Adrenal gland (tissue), 19 donors: ENCODE measurements at regions of chr17 and their contacts with region 1.

Region 1: DNA sequence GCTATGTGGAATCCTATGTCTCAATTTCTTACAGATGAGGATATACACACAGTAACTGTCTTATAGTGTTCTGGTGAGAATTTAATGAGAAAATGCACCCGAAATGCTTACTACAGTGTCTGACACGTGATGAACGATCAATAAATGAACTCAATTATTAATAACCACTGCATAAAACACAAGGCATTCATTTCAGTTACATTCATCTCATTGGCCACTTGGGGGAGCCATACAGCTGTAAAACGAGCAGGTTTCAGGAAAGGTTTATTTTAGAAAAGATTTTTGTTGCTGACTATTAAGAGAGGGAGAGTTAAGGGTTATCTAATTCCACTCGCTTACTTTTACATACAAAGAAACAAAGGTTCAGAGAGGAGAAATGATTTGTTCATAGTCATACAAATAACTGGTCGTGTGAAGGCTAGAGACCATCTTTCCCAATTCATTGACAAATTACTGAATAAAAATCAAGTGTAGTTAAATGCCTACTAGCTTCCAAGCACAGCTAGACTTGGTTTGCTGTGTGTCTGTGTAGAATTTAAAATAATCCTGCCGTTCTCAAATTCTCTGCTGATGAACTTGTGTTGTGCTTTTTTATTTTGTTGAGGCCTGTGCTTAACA is 160.1 kb downstream of the MAP2K4 start:
- DNase-seq: peak in 5 of 7 donors; percentile 24 to 60 (median 42)
- H3K4me3 ChIP-seq: no peak overlapping the region
- H3K27ac ChIP-seq: no peak overlapping the region
- H3K4me1 ChIP-seq: no peaks in the 10 kb centered on the region
- H3K27me3 ChIP-seq: no peaks in the 10 kb centered on the region
- CTCF ChIP-seq: peak; percentile 63 to 77 (median 68)
- POLR2A ChIP-seq: no peak

Region 2: DNA sequence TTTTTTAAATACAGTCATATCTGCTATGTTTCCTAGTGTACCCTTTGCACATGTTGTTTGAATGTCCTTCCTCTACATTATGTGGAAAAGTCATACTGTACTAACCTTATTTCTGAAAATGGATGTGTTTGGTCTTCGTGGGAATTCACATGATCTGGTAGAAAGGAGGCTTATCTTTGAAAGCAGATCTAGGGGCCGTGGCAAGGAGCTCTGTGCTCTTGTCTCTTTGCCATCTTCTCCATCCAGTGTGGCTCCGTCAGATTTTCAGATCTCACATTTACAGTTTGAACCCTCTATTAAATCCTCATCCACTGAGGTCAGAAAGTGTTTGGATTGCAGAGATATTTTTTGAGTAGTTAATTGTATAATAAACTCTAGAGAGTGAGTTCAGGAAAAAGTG is 127.2 kb before region 1 on chr17:
- intact Hi-C with region 1: no loop called
- DNase-seq: no peak
- H3K4me3 ChIP-seq: peak overlapping the region in 1 of 4 donors; percentile 6
- H3K27ac ChIP-seq: no peak overlapping the region
- H3K4me1 ChIP-seq: peaks cover 9 to 56% of the 10 kb centered on the region in 2 donors
- H3K27me3 ChIP-seq: no peaks in the 10 kb centered on the region
- CTCF ChIP-seq: no peak
- POLR2A ChIP-seq: no peak

Region 3: GRCh38 chr17:12744298-12744697 is 563.5 kb after region 1 on chr17:
- intact Hi-C with region 1: loop called in 1 of 2 experiments (anchors 5 kb)
- DNase-seq: no peak
- H3K4me3 ChIP-seq: no peak overlapping the region
- H3K27ac ChIP-seq: no peak overlapping the region
- H3K4me1 ChIP-seq: no peaks in the 10 kb centered on the region
- H3K27me3 ChIP-seq: no peaks in the 10 kb centered on the region
- CTCF ChIP-seq: no peak
- POLR2A ChIP-seq: no peak

Region 4: GRCh38 chr17:13002766-13003451 is 822.2 kb after region 1 on chr17:
- intact Hi-C with region 1: loop called in 1 of 2 experiments (anchors 10 kb)
- DNase-seq: peak; percentile 58 to 94 (median 84)
- H3K4me3 ChIP-seq: no peak overlapping the region
- H3K27ac ChIP-seq: no peak overlapping the region
- H3K4me1 ChIP-seq: no peaks in the 10 kb centered on the region
- H3K27me3 ChIP-seq: no peaks in the 10 kb centered on the region
- CTCF ChIP-seq: peak; percentile 68 to 87 (median 80)
- POLR2A ChIP-seq: no peak